ENCODE measurements at regions of chr1 and their contacts with region 1.

Region 1: DNA sequence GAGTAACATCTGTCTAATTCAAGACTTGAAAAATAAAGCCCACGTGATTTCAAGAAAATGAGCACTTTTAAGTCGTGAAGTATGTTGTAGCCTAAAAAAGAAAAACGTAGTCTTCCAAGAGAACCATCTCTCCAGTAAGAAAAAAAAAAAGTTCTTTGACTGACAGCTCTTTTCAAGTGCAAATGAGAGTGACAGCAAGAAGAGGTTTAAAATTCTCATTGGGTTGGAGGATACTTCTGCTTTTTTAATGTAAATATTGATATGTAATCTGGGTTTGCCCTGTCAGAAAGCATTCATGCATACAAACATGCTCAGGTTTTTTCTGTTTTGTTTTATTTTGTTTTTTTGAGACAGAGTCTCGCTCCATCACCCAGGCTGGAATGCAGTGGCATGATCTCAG is 32.3 kb upstream of the PRDM2 start:
- DNase-seq: no peak
- H3K4me3 ChIP-seq: no peak overlapping the region
- H3K27ac ChIP-seq: no peak overlapping the region
- H3K4me1 ChIP-seq: peaks cover 0 to 4% (median 0%) of the 10 kb centered on the region in 4 donors
- H3K27me3 ChIP-seq: peaks cover 7% of the 10 kb centered on the region
- CTCF ChIP-seq: no peak
- EP300 ChIP-seq: no peak
- POLR2A ChIP-seq: no peak

Region 2: GRCh38 chr1:13593511-13594131 is 74.1 kb before region 1 on chr1:
- in situ Hi-C with region 1: no loop called
- intact Hi-C with region 1: no loop called
- DNase-seq: peak; percentile 26
- H3K4me3 ChIP-seq: no peak overlapping the region
- H3K27ac ChIP-seq: peak overlapping the region; percentile 51 to 68 (median 66)
- H3K4me1 ChIP-seq: peaks cover 0 to 7% (median 3%) of the 10 kb centered on the region in 4 donors
- H3K27me3 ChIP-seq: no peaks in the 10 kb centered on the region
- CTCF ChIP-seq: no peak
- EP300 ChIP-seq: no peak
- POLR2A ChIP-seq: no peak

Region 3: GRCh38 chr1:13687151-13687715 is 19.5 kb after region 1 on chr1:
- in situ Hi-C with region 1: no loop called
- intact Hi-C with region 1: no loop called
- DNase-seq: no peak
- H3K4me3 ChIP-seq: no peak overlapping the region
- H3K27ac ChIP-seq: no peak overlapping the region
- H3K4me1 ChIP-seq: no peaks in the 10 kb centered on the region
- H3K27me3 ChIP-seq: peaks cover 27% of the 10 kb centered on the region
- CTCF ChIP-seq: no peak
- EP300 ChIP-seq: no peak
- POLR2A ChIP-seq: no peak

Region 4: DNA sequence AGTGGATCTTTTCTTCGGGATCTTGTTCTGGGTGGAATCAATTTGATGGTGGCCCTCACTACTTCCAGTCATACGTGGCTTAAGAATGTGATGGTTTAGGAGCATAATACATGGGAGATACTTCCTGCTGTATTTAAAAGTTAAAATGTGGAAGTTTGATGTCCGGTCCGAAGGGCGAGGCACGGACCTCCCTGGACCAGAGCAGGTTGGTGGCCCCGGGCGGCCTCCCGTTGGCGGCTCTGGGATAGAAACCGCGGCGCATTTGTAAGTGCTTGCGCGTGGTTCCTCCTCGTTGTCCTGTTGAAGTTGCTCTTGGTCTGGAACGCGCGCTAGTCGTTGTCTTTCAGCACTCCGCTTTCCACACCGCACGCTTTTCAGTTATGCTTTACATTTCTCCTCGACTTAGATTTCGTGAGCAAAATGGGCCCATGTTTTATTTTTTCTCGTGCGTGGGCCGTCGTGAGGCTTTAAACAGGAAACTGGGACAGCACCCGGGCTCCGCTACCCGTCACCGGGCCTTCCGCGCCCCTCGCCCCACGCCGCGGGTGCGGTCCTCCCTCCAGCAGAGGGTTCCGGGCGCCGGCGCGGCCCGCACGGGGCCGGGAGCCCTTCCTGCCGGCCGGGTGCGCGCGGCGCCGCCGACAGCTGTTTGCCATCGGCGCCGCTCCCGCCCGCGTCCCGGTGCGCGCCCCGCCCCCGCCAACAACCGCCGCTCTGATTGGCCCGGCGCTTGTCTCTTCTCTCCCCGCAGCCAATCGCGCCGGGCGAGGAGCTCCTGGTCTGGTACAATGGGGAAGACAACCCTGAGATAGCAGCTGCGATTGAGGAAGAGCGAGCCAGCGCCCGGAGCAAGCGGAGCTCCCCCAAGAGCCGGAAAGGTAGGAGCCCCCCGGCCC is 81.2 kb after region 1 on chr1:
- in situ Hi-C with region 1: no loop called
- intact Hi-C with region 1: no loop called
- DNase-seq: peak; percentile 98
- H3K4me3 ChIP-seq: peak overlapping the region; percentile 45 to 94 (median 70)
- H3K27ac ChIP-seq: peak overlapping the region; percentile 91 to 99 (median 96)
- H3K4me1 ChIP-seq: peaks cover 8 to 38% (median 23%) of the 10 kb centered on the region in 4 donors
- H3K27me3 ChIP-seq: no peaks in the 10 kb centered on the region
- CTCF ChIP-seq: peak in 1 of 5 experiments; percentile 12
- EP300 ChIP-seq: no peak
- POLR2A ChIP-seq: peak; percentile 78

Region 5: DNA sequence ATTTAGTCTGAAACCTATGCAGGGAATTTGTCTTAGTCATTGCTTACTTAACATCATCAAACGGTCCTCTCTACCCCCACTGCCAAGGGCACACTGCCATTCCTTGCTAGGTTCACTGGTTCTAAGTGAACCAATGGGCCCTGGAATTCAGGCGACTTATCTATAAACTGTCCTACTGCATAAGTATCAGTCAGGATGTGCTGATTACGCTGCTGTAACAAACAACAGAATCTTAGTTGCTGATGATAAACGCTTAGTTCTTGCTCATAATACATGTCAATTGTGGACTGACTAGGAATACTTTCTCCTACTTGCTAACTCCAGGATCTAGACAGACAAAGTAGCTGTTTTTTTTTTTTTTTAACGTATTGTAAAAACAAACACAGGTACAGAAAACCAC is 168.4 kb after region 1 on chr1:
- in situ Hi-C with region 1: no loop called
- intact Hi-C with region 1: no loop called
- DNase-seq: no peak
- H3K4me3 ChIP-seq: no peak overlapping the region
- H3K27ac ChIP-seq: no peak overlapping the region
- H3K4me1 ChIP-seq: peaks cover 0 to 12% (median 10%) of the 10 kb centered on the region in 4 donors
- H3K27me3 ChIP-seq: peaks cover 9% of the 10 kb centered on the region
- CTCF ChIP-seq: no peak
- EP300 ChIP-seq: no peak
- POLR2A ChIP-seq: no peak

Region 6: GRCh38 chr1:13960375-13960987 is 292.8 kb after region 1 on chr1:
- in situ Hi-C with region 1: loop called (anchors 5 to 25 kb)
- intact Hi-C with region 1: loop called (anchors 5 kb)
- DNase-seq: peak; percentile 73
- H3K4me3 ChIP-seq: no peak overlapping the region
- H3K27ac ChIP-seq: no peak overlapping the region
- H3K4me1 ChIP-seq: no peaks in the 10 kb centered on the region
- H3K27me3 ChIP-seq: no peaks in the 10 kb centered on the region
- CTCF ChIP-seq: peak; percentile 94 to 98 (median 97)
- EP300 ChIP-seq: no peak
- POLR2A ChIP-seq: no peak